SK-N-SH (cell line): ENCODE measurements at regions of chr9 and their contacts with region 1.

Region 1: DNA sequence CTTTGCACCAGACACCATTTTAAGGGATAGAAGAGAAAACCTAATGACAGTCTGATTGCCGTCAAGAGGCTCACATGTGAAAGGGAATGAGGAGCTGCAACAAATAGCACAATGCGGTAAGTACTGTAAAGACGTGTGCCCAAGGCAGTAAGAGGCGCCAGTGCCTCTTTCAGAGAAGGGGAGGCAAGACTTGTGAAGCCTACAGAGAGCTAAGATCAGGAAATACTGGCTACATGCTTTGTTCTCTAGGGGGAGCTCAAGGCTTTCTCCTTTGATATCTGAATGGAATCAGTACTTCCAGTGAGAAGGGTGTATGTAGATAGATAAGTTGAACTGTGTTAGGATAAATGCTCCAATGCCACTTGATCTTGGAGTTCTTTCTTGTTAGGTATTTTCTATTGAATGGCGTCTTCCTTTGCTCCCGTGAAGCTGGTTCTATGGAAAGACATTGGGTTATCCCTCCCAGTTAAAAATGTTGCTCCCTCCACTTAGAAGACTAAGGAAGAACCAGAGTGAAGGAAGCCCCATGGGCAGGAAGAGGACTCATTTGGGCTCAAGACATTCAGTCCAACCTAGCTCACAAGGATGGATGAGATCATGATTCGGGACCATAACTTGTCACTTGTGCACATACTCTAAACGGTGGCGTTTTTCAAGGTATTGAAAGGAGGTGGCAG is 23.5 kb upstream of the ALDOB start:
- DNase-seq: peak; percentile 76
- H3K4me3 ChIP-seq: peak overlapping the region in 1 of 2 experiments; percentile 4; a peak in 1 of 4 replicates
- H3K27ac ChIP-seq: no peak overlapping the region
- H3K4me1 ChIP-seq: no peaks in the 10 kb centered on the region
- H3K27me3 ChIP-seq: no peaks in the 10 kb centered on the region
- CTCF ChIP-seq: peak; percentile 86
- EP300 ChIP-seq: no peak
- RAD21 ChIP-seq: peak; percentile 96

Region 2: GRCh38 chr9:101376111-101376848 is 82.8 kb before region 1 on chr9:
- CTCF ChIA-PET with region 1: no interaction called
- POLR2A ChIA-PET with region 1: no interaction called
- DNase-seq: no peak
- H3K4me3 ChIP-seq: no peak overlapping the region
- H3K27ac ChIP-seq: peak overlapping the region in 1 of 2 experiments; percentile 84; a peak in 2 of 4 replicates
- H3K4me1 ChIP-seq: peaks cover 0 to 14% of the 10 kb centered on the region in 2 experiments; a peak in 2 of 4 replicates
- H3K27me3 ChIP-seq: no peaks in the 10 kb centered on the region
- CTCF ChIP-seq: no peak
- EP300 ChIP-seq: peak in 1 of 2 experiments; percentile 60; a peak in 1 of 4 replicates
- RAD21 ChIP-seq: no peak

Region 3: DNA sequence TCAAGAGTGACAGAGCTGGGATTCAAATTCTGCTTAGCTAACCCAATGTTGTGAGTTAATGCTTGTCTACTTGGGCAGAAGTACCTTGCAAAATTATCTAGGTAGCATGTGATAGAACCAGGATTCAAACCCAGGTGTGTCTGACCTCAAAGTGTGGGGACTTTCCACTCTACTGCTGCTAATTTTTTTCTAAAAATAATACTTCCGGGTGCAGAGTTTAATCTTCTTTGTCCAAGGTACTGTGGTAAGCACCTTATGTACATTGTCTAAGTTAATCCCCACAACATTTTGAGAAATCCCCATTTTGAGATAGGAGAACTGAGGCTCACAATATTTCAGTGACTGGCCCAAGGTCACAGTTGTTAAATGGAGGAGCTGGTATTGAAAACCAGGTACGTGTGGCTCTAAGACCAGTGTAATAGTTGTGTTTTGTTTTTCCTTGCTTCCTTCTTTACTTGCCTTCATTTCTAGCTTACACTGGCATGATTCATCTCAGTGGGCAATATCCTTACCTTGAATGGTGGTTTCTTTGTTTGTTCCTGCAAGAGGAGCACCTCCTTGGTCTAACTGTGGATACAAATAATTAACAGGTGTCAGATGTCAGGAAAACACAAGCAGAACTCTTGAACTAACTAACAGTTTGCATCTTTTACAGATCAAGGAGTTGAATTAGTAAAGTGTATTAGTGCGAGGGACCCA is 31.0 kb before region 1 on chr9:
- CTCF ChIA-PET with region 1: interaction called, 13 read pairs
- POLR2A ChIA-PET with region 1: no interaction called
- DNase-seq: no peak
- H3K4me3 ChIP-seq: no peak overlapping the region
- H3K27ac ChIP-seq: no peak overlapping the region
- H3K4me1 ChIP-seq: no peaks in the 10 kb centered on the region
- H3K27me3 ChIP-seq: no peaks in the 10 kb centered on the region; the same call in 1 of the 2 replicates
- CTCF ChIP-seq: no peak
- EP300 ChIP-seq: no peak
- RAD21 ChIP-seq: no peak

Region 4: GRCh38 chr9:101443364-101443771 is 15.7 kb before region 1 on chr9:
- CTCF ChIA-PET with region 1: interaction called, 49 read pairs
- POLR2A ChIA-PET with region 1: no interaction called
- DNase-seq: no peak
- H3K4me3 ChIP-seq: no peak overlapping the region
- H3K27ac ChIP-seq: no peak overlapping the region
- H3K4me1 ChIP-seq: peaks cover 0 to 4% of the 10 kb centered on the region in 2 experiments; a peak in 1 of 4 replicates
- H3K27me3 ChIP-seq: no peaks in the 10 kb centered on the region
- CTCF ChIP-seq: no peak
- EP300 ChIP-seq: no peak
- RAD21 ChIP-seq: no peak

Region 5: GRCh38 chr9:101486693-101487442 is 27.8 kb after region 1 on chr9:
- CTCF ChIA-PET with region 1: interaction called, 135 read pairs
- POLR2A ChIA-PET with region 1: interaction called, 7 read pairs
- DNase-seq: peak; percentile 86
- H3K4me3 ChIP-seq: peak overlapping the region; percentile 66 to 73
- H3K27ac ChIP-seq: peak overlapping the region; percentile 19 to 87; a peak in 3 of 4 replicates
- H3K4me1 ChIP-seq: peaks cover 0 to 3% of the 10 kb centered on the region in 2 experiments; a peak in 2 of 4 replicates
- H3K27me3 ChIP-seq: no peaks in the 10 kb centered on the region
- CTCF ChIP-seq: peak; percentile 38
- EP300 ChIP-seq: no peak
- RAD21 ChIP-seq: peak; percentile 67

Region 6: GRCh38 chr9:101530077-101530711 is 71.1 kb after region 1 on chr9:
- CTCF ChIA-PET with region 1: interaction called, 363 read pairs
- POLR2A ChIA-PET with region 1: interaction called, 3 read pairs
- DNase-seq: peak; percentile 57
- H3K4me3 ChIP-seq: no peak overlapping the region; a peak in 1 of 4 replicates
- H3K27ac ChIP-seq: no peak overlapping the region
- H3K4me1 ChIP-seq: peaks cover 0 to 5% of the 10 kb centered on the region in 2 experiments; a peak in 2 of 4 replicates
- H3K27me3 ChIP-seq: no peaks in the 10 kb centered on the region
- CTCF ChIP-seq: peak; percentile 90
- EP300 ChIP-seq: no peak
- RAD21 ChIP-seq: peak; percentile 86